ENCODE measurements at regions of chr2 and their contacts with region 1.

Region 1: GRCh38 chr2:10832203-10832936 is 19.8 kb upstream of the PDIA6 start:
- DNase-seq: peak; percentile 79 to 91 (median 90)
- ATAC-seq: peak; percentile 76 to 82
- H3K4me3 ChIP-seq: no peak overlapping the region
- H3K27ac ChIP-seq: no peak overlapping the region
- H3K4me1 ChIP-seq: no peaks in the 10 kb centered on the region
- H3K27me3 ChIP-seq: no peaks in the 10 kb centered on the region

Region 2: DNA sequence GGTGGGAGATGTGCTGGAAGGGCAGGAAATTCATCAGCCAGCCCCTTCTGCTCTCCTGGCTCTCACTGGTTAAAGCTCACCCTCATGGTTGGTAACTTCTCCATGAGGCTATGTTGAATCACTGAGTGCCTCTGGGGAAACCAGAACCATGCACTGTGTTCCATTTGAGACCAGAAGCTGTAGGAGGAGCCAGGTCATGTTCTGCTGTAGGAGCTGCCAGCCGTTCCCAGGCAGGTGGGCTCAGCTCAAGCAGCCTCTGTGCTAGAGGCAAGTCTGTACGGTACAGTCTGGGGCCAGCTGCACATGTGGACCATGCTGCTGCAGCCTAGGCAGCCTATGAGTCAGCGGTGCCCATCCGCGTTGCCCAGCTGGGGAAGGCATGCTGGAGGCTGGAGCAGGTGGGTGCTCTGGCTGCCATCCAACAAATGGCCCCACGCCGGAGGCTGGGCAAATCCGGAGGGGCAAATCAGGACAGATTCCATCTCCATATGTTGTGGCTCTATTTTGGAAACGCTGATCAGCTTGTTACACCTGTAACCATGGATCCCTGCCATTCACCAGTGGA is 57.4 kb after region 1 on chr2:
- intact Hi-C with region 1: loop called in 1 of 4 experiments (anchors 10 kb)
- DNase-seq: no peak
- ATAC-seq: peak; percentile 22 to 47
- H3K4me3 ChIP-seq: no peak overlapping the region
- H3K27ac ChIP-seq: no peak overlapping the region
- H3K4me1 ChIP-seq: peaks cover 2% of the 10 kb centered on the region
- H3K27me3 ChIP-seq: no peaks in the 10 kb centered on the region

Region 3: DNA sequence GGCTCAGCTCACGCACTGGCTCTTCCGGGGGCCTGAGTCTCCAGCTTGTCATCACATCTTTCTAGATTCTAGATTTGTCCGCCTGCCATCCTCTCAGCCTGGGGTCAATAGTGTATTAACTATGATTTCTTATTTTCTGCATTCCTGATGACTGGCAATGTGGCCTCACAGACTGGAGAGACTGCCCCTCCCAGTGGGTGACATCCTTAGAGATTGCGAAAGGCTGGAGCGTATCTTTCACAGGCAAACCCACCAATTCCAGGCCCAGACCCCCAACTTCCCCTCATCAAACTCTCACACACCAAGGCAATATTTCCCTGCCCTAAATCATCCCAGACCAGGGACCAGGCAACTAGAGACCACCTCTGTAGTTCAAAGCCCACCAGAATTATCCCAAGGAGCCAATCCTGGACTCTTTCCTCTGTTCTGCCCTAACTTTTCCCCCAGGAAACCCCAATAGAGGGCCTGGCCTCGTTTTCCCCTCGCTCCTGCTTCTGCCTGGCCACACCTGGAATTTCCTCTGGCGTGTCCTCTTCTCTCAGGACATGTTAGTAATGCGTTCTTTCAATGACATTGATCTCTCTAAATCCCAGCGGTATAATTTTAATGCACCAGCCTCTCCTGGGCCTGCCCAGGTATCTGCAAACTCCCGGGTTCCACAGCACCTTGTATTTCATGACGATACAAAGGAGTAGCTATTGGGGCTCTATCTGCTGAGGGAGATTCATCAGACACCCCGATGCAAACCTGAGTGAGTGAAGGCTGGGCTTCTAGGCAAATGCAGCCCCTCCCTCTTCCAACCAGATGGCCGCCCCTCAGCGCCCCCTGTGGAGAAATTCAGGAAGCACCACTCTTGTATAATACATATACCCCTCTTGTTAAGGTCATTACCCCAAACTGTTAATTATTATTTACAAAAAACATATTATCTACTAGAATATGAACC is 77.0 kb after region 1 on chr2:
- intact Hi-C with region 1: loop called in 2 of 4 experiments (anchors 5 kb)
- DNase-seq: no peak
- ATAC-seq: no peak
- H3K4me3 ChIP-seq: no peak overlapping the region
- H3K27ac ChIP-seq: no peak overlapping the region
- H3K4me1 ChIP-seq: no peaks in the 10 kb centered on the region
- H3K27me3 ChIP-seq: no peaks in the 10 kb centered on the region

Region 4: GRCh38 chr2:11124503-11125068 is 292.2 kb after region 1 on chr2:
- intact Hi-C with region 1: loop called (anchors 2 to 5 kb)
- DNase-seq: peak; percentile 49 to 79 (median 78)
- ATAC-seq: peak; percentile 38 to 47
- H3K4me3 ChIP-seq: no peak overlapping the region
- H3K27ac ChIP-seq: no peak overlapping the region
- H3K4me1 ChIP-seq: no peaks in the 10 kb centered on the region
- H3K27me3 ChIP-seq: no peaks in the 10 kb centered on the region

Region 5: DNA sequence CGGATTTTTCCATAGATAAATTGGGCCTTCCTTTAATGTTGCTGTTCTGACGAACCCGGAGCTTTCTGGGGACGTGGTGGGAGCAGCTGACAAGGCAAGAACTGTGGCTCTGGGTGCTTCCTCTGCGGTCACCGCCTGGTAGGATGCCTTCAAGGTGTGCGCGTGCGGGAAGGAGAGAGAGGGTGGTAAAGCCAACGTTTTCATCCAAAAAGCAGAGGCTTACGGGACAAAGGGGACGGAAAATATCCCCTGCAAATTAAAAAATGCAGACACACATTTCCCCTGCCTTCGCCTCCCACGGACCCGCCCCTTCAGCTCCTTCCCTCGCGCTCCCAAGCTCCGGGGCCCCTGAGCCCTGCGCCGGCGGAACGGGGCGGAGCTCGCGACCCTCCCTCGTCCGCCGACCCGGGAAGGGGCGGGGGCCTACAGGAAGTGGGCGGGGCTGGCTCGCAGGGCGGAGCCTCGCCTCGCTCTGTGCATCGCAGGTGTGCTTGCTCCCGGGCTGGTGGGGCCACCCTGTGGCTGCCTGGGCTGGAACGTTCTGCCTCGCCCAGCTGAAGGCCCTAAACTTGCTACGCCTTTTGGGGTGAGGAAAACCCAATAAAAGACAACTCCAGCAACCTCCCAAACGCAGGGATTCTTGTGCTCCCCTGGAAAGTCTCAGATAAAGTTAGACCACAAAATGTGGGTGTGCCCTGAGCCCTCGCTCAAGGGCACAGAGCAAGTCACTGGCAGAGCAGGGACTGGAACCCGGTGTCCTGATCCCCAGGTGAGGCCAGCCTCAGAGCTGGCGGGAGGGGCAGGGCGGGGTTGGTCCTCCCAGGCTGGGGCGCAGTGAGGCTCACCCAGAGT is 297.5 kb after region 1 on chr2:
- intact Hi-C with region 1: loop called in 3 of 4 experiments (anchors 2 kb)
- DNase-seq: peak; percentile 56 to 81 (median 81)
- ATAC-seq: peak; percentile 51 to 58
- H3K4me3 ChIP-seq: peak overlapping the region; percentile 34
- H3K27ac ChIP-seq: no peak overlapping the region
- H3K4me1 ChIP-seq: no peaks in the 10 kb centered on the region
- H3K27me3 ChIP-seq: no peaks in the 10 kb centered on the region

Measured in right cardiac atrium (tissue), 5 donors.